ENCODE measurements at regions of chr11 and their contacts with region 1.

Region 1: DNA sequence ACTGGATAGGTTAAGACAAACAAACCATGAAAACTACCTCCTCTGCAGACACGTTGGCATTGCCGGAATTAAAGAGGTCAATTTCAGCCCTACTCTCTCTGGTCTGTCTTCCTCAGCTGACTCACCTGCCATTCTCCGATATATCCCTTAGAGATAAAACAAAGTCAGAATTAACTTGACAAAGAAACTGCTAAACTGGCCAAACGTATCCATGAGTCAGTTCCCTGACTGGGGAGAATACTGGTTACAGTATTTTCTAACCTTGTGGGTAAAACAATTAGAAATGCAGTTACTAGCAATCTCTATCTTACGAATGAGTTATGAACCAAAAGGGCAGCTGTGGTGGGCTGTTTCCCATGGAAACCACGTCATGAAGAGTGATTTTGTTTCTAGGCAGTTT is 96.2 kb downstream of the RDX start:
- DNase-seq: no peak
- H3K4me3 ChIP-seq: no peak overlapping the region
- H3K27ac ChIP-seq: no peak overlapping the region
- H3K4me1 ChIP-seq: no peaks in the 10 kb centered on the region
- H3K27me3 ChIP-seq: no peaks in the 10 kb centered on the region
- CTCF ChIP-seq: no peak
- POLR2A ChIP-seq: no peak

Region 2: DNA sequence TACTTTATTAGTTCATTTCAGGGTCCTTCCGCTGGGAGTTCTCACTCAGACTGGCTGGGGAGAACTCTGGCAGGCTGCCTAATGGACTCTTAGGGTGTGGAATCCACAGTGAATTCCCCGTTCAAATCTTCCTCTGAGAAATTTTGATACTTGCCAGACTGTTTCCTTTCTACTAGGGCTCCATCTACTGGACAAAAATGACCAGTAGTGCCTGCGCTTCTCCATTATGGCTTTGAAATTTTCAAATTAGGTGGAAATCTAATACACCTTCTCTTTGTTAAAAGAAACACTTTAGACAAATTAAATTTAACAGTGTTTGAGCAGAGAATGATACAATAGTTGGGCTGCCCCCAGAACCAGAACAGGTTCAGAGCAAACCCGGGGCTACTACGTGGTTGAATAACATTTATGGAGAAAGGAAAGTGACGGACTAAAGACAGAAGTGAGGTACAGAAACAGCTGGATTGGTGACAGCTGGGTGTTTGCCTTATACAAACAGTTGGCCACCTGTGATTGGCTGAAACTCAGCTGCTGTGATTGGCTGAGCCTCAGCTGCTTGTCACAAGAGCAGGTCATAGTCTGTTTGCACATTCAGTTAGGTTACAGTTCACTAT is 176.6 kb after region 1 on chr11:
- intact Hi-C with region 1: loop called (anchors 10 kb)
- DNase-seq: peak in 1 of 2 donors; percentile 51
- H3K4me3 ChIP-seq: peak overlapping the region in 2 of 3 donors; percentile 4 to 54
- H3K27ac ChIP-seq: peak overlapping the region; percentile 43 to 73
- H3K4me1 ChIP-seq: no peaks in the 10 kb centered on the region
- H3K27me3 ChIP-seq: no peaks in the 10 kb centered on the region
- CTCF ChIP-seq: peak in 2 of 3 donors; percentile 69 to 74
- POLR2A ChIP-seq: no peak